BJ (cell line): ENCODE measurements at regions of chr20 and their contacts with region 1.

Region 1: DNA sequence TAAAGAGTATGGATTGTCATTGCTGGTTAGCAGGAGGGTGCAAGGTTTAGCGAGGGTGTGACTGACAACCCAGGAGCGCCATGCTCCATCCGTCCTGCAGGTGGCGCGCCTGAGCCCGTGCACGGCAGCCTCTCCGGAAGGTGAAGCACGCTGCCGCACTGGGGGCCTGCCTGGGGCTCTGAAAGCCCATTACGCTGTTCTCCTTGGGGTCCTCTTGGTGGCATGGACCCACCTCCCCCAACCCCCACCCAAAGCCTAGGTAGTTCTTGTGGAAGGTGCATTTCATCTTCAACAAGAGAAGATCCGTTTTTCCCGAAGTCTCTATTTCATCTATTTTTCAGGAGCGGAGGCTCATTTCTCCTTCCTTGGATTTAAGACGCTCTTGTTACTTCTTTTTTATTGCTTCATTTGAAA is 197.4 kb upstream of the KCNG1 start:
- DNase-seq: no peak
- H3K4me3 ChIP-seq: no peak overlapping the region
- H3K27me3 ChIP-seq: peaks cover 13% of the 10 kb centered on the region
- CTCF ChIP-seq: peak; percentile 98

Region 2: GRCh38 chr20:51022803-51023630 is 197.3 kb before region 1 on chr20 and contains the start of gene KCNG1:
- CTCF ChIA-PET with region 1: no interaction called
- POLR2A ChIA-PET with region 1: no interaction called
- DNase-seq: no peak
- H3K4me3 ChIP-seq: peak within 1 kb of the TSS; percentile 63
- H3K27me3 ChIP-seq: peaks cover 4% of the 10 kb centered on the region
- CTCF ChIP-seq: no peak
- polyA plus RNA-seq, gene KCNG1: 13.2 and 18.2 TPM in 2 replicates

Region 3: DNA sequence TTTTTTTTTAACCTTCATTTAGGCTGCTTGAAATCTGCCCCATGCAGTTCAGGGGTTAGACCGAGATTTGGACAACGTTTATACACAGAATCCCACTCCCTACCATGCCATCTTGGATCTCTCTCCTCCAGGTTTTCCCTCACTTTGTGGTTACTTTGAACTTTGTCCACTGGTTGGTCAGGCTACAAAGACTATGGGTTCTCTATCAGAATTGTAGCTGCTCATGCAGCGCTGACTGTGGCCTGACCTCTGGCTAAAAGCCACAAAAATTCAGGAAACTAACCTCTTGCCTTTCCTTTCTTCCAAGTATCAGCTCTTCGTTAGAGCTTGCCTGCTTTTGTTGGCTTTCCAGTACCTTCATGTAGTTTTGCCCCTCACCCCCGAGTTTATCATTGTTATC is 152.5 kb before region 1 on chr20:
- CTCF ChIA-PET with region 1: no interaction called
- POLR2A ChIA-PET with region 1: no interaction called
- DNase-seq: no peak
- H3K4me3 ChIP-seq: no peak overlapping the region
- H3K27me3 ChIP-seq: peaks cover 5% of the 10 kb centered on the region; the same call in 1 of the 2 replicates
- CTCF ChIP-seq: no peak

Region 4: GRCh38 chr20:51210084-51210483 is 10.2 kb before region 1 on chr20:
- CTCF ChIA-PET with region 1: interaction called, 11 read pairs
- POLR2A ChIA-PET with region 1: no interaction called
- DNase-seq: no peak
- H3K4me3 ChIP-seq: no peak overlapping the region
- H3K27me3 ChIP-seq: peaks cover 15% of the 10 kb centered on the region
- CTCF ChIP-seq: no peak

Region 5: GRCh38 chr20:51249215-51249614 is 28.9 kb after region 1 on chr20:
- CTCF ChIA-PET with region 1: interaction called, 11 read pairs
- POLR2A ChIA-PET with region 1: no interaction called
- DNase-seq: no peak
- H3K4me3 ChIP-seq: no peak overlapping the region
- H3K27me3 ChIP-seq: peaks cover 23% of the 10 kb centered on the region
- CTCF ChIP-seq: no peak

Region 6: DNA sequence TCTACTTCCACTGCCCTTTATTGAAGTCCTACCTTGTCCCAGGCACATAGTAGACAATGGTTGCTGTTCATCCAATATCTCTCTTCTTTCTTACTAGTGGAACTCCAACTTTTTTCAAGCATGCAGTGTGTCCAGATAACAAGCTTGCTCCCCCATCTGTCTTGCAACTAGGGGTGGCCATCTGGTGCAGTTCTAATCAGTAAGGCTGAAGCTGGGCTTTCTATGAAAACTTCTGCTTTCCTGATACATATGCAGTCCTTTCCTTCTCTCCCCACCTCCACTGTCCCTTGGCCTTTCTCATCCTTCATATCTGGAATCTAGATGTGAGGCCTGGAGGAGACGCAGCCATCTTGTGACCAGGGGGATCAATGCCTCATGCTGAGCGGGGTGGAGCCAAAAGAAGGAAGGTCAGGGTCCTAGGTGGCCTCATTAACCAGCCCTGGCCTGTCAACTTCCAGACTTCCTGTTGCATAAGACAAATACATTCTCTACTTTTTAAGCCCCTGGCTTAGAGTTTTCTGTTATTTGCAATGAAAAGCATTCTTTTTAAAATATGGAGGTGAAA is 1030.9 kb after region 1 on chr20:
- CTCF ChIA-PET with region 1: no interaction called
- POLR2A ChIA-PET with region 1: no interaction called
- DNase-seq: no peak
- H3K4me3 ChIP-seq: no peak overlapping the region
- H3K27me3 ChIP-seq: no peaks in the 10 kb centered on the region
- CTCF ChIP-seq: no peak